H1 (cell line): ENCODE measurements at regions of chr1 and their contacts with region 1.

Region 1: GRCh38 chr1:53278201-53278725 is 39.9 kb upstream of the MAGOH start:
- DNase-seq: peak in 1 of 2 experiments; percentile 89
- H3K4me3 ChIP-seq: no peak overlapping the region
- H3K27ac ChIP-seq: no peak overlapping the region
- H3K4me1 ChIP-seq: no peaks in the 10 kb centered on the region
- H3K27me3 ChIP-seq: no peaks in the 10 kb centered on the region
- CTCF ChIP-seq: peak; percentile 68 to 72 (median 69)
- EP300 ChIP-seq: no peak
- POLR2A ChIP-seq: no peak
- RAD21 ChIP-seq: peak; percentile 85 to 87

Region 2: DNA sequence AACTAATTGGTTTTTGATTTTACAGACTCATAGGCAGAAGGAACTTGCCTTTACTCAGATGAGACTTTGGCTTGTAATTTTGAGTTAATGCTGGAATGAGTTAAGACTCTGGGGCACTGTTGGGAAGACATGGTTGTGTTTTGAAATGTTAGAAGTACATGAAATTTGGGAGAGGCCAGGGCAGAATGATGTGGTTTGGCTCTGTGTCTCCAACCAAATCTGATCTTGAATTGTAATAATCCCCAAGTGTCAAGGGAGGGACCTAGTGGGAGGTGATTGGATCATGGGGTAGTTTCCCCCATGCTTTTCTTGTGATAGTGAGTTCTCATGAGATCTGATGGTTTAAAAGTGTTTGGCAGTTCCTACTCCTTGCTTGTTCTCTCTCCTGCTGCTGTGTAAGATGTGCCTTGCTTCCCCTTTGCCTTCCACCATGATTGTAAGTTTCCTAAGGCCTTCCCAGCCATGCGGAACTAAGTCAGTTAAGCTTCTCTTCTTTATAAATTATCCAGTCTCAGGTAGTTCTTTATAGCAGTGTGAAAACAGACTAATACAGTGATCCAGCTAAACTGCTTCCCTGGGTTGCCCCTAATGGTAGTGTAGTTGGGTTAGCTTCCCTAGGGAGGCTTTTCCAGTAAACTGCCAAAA is 71.4 kb before region 1 on chr1:
- CTCF ChIA-PET with region 1: no interaction called
- POLR2A ChIA-PET with region 1: no interaction called
- DNase-seq: no peak
- H3K4me3 ChIP-seq: no peak overlapping the region
- H3K27ac ChIP-seq: no peak overlapping the region
- H3K4me1 ChIP-seq: no peaks in the 10 kb centered on the region
- H3K27me3 ChIP-seq: no peaks in the 10 kb centered on the region
- CTCF ChIP-seq: no peak
- EP300 ChIP-seq: no peak
- POLR2A ChIP-seq: no peak
- RAD21 ChIP-seq: no peak

Region 3: GRCh38 chr1:53266106-53266505 is 12.2 kb before region 1 on chr1:
- CTCF ChIA-PET with region 1: interaction called, 36 read pairs
- POLR2A ChIA-PET with region 1: no interaction called
- DNase-seq: no peak
- H3K4me3 ChIP-seq: no peak overlapping the region
- H3K27ac ChIP-seq: no peak overlapping the region
- H3K4me1 ChIP-seq: no peaks in the 10 kb centered on the region
- H3K27me3 ChIP-seq: no peaks in the 10 kb centered on the region
- CTCF ChIP-seq: peak in 2 of 3 experiments; percentile 34 to 56; a peak in 1 of 4 replicates
- EP300 ChIP-seq: no peak
- POLR2A ChIP-seq: no peak
- RAD21 ChIP-seq: peak; percentile 50 to 68; a peak in 3 of 4 replicates

Region 4: DNA sequence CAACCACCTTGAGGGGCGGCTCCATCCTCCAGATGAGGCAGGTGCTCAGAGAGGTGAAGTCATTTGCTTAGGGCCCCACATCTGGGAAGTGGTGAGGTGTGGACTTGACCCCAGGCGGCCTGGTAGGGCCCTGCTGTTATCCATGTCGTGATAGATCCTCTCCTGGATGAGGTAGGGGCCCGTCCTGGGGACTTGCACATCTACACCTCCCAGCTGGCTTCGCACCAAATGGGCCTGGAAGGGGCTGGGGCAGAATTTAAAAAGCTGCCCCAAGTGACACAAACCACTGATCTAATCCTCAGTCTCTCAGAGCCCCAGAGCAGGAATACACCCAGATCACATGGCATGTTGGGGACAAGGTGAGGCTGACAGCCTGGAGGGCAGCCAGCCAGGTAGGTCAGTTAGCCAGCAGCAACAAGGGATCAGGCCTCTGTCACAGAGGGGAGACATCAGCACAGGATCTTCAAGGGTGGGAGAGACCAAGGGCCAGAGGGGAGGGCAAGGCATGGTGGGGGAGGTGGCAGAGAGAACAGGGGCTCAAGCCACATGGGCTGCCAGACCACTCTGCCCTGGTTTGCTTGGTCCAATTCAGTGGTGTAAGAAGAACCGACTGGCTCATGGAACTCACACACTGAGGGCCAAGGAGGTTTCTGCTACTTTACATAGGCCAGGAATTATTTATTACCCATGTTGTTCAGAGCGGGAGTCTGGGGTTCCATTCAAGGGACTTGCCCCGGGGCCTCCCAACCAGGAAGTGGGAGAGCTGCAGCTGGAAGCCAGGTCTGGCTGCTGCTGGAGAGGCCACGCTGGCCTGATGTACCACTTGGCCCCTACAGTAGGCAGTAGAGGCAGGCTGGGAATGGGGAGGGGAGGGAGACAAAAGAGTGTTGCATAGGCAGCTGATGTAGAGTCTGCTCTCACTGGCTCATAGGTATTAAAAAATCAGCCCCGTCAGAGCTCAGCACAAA is 37.5 kb after region 1 on chr1:
- CTCF ChIA-PET with region 1: interaction called, 16 read pairs
- POLR2A ChIA-PET with region 1: interaction called, 3 read pairs
- DNase-seq: no peak
- H3K4me3 ChIP-seq: no peak overlapping the region
- H3K27ac ChIP-seq: no peak overlapping the region
- H3K4me1 ChIP-seq: peaks cover 0 to 12% (median 4%) of the 10 kb centered on the region in 4 experiments; a peak in 4 of 7 replicates
- H3K27me3 ChIP-seq: no peaks in the 10 kb centered on the region
- CTCF ChIP-seq: peak; percentile 28 to 55 (median 52); a peak in 3 of 4 replicates
- EP300 ChIP-seq: no peak
- POLR2A ChIP-seq: no peak
- RAD21 ChIP-seq: peak in 1 of 2 experiments; percentile 19; a peak in 2 of 4 replicates

Region 5: DNA sequence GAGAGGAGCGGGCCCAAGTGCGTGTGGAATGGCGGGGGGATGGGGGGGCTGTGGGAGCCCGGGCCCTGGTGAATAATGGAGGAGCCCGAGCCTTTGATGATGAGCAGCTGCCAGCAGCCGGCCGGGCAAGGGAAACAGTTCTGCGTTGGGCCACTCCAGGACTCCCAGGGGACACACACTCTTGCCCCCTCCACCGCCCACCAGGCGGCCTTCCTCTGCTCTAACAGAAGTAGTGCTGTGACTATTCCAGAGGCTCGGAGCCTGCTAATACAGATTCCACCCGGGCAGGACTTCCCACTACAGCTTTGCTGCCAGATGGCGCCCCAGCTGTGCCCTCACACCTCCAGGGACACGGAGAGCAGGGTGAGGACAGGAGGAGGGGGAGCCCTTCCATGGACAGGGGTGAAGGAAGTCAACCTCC is 97.8 kb after region 1 on chr1:
- CTCF ChIA-PET with region 1: interaction called, 12 read pairs
- POLR2A ChIA-PET with region 1: no interaction called
- DNase-seq: peak in 1 of 2 experiments; percentile 53
- H3K4me3 ChIP-seq: no peak overlapping the region
- H3K27ac ChIP-seq: no peak overlapping the region
- H3K4me1 ChIP-seq: peaks cover 0 to 8% (median 3%) of the 10 kb centered on the region in 4 experiments; a peak in 3 of 7 replicates
- H3K27me3 ChIP-seq: peaks cover 0 to 3% (median 0%) of the 10 kb centered on the region in 4 experiments; a peak in 2 of 7 replicates
- CTCF ChIP-seq: no peak
- EP300 ChIP-seq: no peak
- POLR2A ChIP-seq: no peak
- RAD21 ChIP-seq: no peak

Region 6: DNA sequence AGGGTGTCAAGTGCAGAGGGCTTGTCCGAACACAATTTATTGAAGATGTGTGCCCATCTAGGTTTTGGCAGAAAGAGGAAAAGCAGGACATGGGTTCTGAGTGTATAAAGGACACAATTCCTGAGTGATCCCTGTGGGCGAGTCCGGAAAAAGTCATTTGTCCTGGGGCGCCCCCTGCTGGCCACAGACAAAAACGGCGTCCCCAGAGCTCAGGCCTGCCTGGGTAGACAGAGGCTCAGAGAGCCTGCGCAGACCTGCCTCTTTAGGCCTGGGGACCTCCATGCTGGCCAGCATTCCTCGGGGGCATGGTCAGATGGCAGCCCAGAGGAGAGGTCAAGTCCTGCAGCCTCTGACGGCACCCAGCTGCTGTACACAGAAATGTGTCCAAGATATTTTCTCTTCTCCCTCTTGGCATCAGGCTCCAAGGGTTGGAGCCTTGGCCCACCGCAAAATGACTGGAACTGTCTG is 115.1 kb after region 1 on chr1:
- CTCF ChIA-PET with region 1: interaction called, 85 read pairs
- POLR2A ChIA-PET with region 1: interaction called, 3 read pairs
- DNase-seq: peak; percentile 39 to 97
- H3K4me3 ChIP-seq: no peak overlapping the region
- H3K27ac ChIP-seq: no peak overlapping the region
- H3K4me1 ChIP-seq: peaks cover 4 to 16% (median 10%) of the 10 kb centered on the region in 4 experiments; a peak in 6 of 7 replicates
- H3K27me3 ChIP-seq: no peaks in the 10 kb centered on the region; a peak in 2 of 7 replicates
- CTCF ChIP-seq: peak; percentile 79 to 94 (median 89)
- EP300 ChIP-seq: no peak
- POLR2A ChIP-seq: no peak
- RAD21 ChIP-seq: peak; percentile 89 to 92